CD8-positive, alpha-beta T cell (primary cell): ENCODE measurements at regions of chrX and their contacts with region 1.

Region 1: DNA sequence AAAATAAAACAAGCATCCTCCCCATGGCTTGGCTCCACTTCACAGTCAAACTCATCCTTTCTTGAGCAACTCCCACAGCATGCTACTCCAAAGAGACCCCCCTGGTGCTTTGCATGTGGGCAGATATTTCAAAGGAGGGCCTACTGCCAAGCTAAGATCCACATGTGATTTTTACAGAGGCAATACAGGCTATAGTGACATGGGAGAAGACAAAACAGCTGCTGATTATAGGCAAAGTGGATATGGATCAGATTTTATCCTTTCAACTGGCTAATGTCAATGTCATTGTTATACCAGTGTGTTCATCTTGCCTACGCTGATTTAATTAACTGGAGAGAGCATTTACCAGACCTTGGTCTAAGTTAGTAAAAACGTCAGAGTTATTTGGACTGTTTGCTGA is 328.3 kb downstream of the KLHL13 start:
- DNase-seq: no peak
- ATAC-seq: no peak
- H3K4me3 ChIP-seq: no peak overlapping the region
- H3K4me3 Mint-ChIP-seq: no peak overlapping the region
- H3K27ac ChIP-seq: no peak overlapping the region
- H3K27ac Mint-ChIP-seq: no peak overlapping the region
- H3K4me1 ChIP-seq: no peaks in the 10 kb centered on the region
- H3K4me1 Mint-ChIP-seq: no peaks in the 10 kb centered on the region
- H3K27me3 ChIP-seq: no peaks in the 10 kb centered on the region
- H3K27me3 Mint-ChIP-seq: no peaks in the 10 kb centered on the region
- CTCF ChIP-seq: no peak

Region 2: DNA sequence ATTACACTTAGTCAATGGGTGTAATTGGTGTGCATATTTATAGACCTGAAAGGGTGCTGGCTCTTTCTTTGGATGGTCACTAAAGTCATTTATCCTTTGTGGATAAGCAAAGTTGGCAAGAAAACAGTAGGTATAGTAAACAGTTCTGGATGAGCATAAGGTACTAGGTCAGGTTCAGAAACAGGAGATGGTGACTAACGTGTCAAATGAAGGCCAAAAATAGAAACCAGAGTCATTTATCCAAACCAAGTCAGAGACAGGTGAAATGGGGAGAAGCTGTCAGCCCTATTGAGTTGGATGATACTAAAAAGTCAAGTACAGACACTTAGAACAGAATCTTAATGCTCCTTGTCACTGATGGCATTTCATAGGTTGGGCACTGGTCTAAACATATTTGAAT is 15.1 kb after region 1 on chrX:
- CTCF ChIA-PET with region 1: no interaction called
- POLR2A ChIA-PET with region 1: no interaction called
- intact Hi-C with region 1: loop called in 1 of 2 experiments (anchors 1 kb)
- DNase-seq: no peak
- ATAC-seq: no peak
- H3K4me3 ChIP-seq: no peak overlapping the region
- H3K4me3 Mint-ChIP-seq: no peak overlapping the region
- H3K27ac ChIP-seq: no peak overlapping the region
- H3K27ac Mint-ChIP-seq: no peak overlapping the region
- H3K4me1 ChIP-seq: no peaks in the 10 kb centered on the region
- H3K4me1 Mint-ChIP-seq: no peaks in the 10 kb centered on the region
- H3K27me3 ChIP-seq: no peaks in the 10 kb centered on the region
- H3K27me3 Mint-ChIP-seq: no peaks in the 10 kb centered on the region
- CTCF ChIP-seq: no peak